G401 (cell line): ENCODE measurements at regions of chr6 and their contacts with region 1.

Region 1: DNA sequence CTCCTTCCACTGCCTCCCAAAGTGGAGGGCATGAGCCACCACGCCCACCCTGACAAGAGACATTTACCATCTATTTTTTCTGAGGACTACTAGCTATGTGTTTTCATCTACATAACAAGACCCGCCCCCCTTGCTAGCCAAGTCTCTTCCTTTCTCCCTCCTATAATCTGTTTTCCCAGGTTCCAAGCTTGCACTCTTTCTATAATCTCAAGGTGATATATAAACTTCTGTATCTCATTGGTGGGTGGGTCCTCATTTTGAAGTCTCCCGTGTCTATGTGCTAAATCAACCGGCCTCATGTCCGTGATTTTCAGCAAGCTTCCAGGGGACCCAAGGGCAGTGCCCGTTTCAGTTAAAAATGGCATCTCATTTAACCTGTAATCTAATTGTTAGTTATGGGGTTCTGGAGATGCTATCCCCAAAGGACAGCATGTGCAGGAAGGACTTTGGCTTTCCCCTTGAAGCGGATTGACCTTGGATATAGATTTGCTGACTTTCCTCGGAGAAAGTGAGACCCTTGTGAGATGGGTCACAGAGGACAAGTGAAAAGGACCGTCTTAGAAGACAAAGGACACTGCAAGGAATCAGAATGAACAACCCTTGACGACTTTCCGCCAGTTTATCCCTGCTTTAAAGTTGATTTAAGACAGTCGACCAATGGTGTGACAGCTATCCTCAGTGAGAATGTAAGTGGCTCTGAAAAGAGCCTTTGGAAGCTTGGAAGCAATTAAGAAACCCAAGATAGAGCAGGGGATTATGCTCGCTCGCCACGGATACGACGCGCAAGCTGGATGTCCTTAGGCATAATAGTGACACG is 22.4 kb downstream of the OR2B2 start:
- DNase-seq: peak; percentile 12

Region 2: DNA sequence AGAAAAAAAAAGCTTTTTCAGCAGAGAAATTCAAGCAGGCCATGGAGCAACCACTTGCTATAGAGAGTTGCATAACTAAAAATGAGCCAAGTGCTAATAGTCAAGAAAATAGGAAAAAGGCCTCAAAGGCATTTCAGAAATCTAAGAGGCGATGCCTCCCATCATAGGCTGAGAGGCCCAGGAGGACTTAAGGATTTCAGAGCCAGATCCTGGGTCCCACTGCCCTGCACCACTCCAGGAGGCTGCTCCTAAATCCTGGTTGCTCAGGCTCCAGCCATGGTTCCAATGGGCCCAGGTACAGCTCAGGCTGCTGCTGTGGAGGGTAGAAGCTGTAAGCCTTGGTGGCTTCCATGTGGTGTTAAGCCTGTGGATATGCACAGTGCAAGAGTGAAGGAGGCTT is 495.8 kb before region 1 on chr6:
- in situ Hi-C with region 1: no loop called
- DNase-seq: no peak

Region 3: DNA sequence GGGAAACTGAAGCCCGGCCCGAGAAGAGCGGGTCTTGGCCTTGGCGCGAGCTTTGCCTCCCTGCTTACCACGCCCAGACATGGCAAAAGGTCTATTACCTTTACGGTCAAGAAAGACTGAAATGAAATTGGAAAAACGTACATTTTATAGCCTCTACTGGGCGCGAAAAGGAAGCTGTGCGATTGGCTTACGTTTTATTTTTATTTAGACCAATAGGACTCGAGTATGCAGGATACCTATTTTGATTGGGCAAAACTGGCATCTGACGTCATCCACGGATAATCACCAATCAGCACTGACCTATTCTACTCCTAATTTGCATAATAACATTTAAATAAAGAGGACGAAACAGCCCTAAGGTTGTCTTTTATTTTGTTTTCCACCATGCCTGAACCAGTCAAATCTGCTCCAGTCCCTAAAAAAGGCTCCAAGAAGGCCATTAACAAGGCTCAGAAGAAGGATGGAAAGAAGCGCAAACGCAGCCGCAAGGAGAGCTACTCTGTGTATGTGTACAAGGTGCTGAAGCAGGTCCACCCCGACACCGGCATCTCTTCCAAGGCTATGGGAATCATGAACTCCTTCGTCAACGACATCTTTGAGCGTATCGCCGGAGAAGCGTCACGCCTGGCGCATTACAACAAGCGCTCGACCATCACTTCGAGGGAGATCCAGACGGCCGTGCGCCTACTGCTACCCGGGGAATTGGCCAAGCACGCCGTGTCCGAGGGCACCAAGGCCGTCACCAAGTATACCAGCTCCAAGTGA is 75.0 kb before region 1 on chr6:
- in situ Hi-C with region 1: loop called (anchors 5 kb)
- DNase-seq: peak; percentile 83

Region 4: GRCh38 chr6:27970444-27970843 is 80.6 kb after region 1 on chr6:
- in situ Hi-C with region 1: no loop called
- DNase-seq: no peak